Astrocyte of the cerebellum (primary cell): ENCODE measurements at regions of chr5 and their contacts with region 1.

Region 1: DNA sequence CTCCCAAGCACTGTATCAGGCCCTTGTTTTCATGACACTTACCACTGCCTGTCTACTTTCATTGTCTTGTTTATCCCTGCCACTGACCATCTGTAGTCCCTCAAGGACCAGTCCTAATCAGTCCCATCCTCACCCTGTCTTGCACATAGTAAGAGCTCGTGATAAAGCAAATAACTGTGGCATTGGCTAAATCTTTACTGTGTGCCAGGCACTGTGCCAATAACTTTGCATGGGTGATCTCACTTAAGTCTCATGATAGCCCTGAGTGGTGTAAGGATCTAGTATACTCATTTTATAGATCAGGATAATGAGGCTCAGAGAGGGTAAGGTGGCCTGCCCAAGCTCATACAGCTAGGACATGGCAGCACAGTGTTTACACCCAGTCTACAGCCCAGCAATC is 5.6 kb downstream of the CDX1 start:
- DNase-seq: no peak
- H3K4me3 ChIP-seq: no peak overlapping the region
- CTCF ChIP-seq: no peak

Region 2: DNA sequence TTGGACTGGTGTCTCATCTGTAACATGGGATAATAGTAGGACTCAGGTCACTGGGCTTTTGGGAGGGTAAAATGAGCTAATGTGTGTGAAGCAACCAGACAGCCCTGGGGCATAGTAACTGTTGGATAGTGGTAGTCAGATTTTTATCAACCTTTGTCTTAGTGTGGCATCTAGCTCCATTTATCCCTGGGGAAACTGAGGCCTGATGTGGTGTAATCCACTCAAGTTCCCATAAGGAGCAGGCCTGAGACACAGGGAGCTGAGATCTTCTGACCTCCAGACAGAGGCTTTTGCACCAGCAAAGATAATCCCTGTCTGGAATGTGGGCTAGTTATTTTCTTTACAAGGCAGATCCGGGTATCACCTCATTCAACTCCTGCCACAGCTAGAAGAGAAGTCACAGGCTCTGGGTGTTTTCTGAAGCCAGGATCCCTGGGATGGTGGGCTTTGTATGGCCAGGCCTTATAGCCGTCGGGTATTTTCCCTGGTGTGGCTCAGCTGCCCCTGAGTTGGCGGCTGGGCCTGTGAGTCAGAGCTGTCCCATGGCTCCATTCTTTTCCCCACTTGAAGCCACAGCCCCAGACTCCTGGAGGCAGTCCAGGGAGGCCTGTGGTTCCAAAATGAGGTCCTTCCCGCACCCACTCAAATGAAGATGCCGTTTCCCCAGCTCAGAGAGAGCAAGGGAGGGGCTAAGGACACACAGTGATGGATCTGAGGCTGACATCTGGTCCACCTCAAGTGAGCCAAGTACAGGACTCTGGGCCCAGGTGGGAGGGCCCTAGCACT is 59.7 kb before region 1 on chr5:
- in situ Hi-C with region 1: no loop called
- DNase-seq: peak; percentile 87
- H3K4me3 ChIP-seq: no peak overlapping the region
- CTCF ChIP-seq: no peak

Region 3: DNA sequence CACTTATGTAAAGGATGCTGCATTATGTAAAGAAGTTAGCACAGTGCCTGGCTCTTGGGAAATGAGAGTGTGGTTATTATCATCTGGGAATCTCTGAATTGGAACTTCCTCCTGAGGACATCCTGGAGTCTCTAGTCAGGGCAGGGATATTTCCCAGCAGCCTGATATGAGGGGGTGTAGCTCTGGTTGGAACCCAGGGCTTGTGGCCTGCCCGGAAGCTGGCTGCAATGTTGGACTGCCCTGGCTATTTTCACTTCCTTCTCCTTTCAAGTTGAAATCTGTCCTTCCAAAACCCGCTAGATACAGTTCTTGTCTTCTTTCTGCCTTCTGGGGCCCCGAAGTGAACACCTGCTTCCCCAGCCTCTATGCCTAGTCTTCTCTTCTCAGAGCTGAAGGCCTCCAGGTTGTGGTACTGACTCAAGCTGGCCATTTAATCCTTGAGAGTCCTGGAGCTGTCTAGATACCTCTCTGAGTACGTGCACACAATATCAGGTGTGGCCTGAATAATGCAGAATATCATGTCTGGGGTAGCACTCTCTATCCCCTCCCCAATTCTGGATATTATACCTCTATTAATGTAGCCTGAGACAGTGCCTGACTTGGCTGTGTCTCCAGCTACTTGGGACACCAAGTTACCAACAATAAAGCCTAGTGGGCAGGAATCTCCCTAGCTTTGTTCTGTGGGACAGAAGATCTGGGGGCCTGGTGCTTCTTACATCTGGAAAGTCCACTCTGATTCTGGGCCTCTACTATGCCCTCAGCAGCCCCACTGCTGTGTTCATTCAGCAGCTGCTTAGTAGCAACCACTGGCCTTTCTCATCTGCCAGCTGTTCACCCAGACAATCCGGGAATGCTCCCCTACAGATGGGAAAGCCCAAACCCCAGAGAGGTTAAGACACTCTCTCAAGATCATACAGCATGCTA is 62.7 kb after region 1 on chr5:
- in situ Hi-C with region 1: loop called (anchors 5 kb)
- DNase-seq: no peak
- H3K4me3 ChIP-seq: no peak overlapping the region
- CTCF ChIP-seq: no peak